ENCODE measurements at regions of chr20 and their contacts with region 1.

Region 1: GRCh38 chr20:32521780-32522525 is 63.2 kb downstream of the NOL4L start:
- DNase-seq: peak; percentile 41 to 73
- H3K4me3 ChIP-seq: no peak overlapping the region
- H3K27ac ChIP-seq: no peak overlapping the region
- H3K4me1 ChIP-seq: peaks cover 20% of the 10 kb centered on the region
- H3K27me3 ChIP-seq: no peaks in the 10 kb centered on the region
- CTCF ChIP-seq: peak; percentile 88

Region 2: GRCh38 chr20:32155017-32155981 is 366.7 kb before region 1 on chr20:
- CTCF ChIA-PET with region 1: no interaction called
- POLR2A ChIA-PET with region 1: no interaction called
- intact Hi-C with region 1: loop called (anchors 5 kb)
- DNase-seq: peak in 1 of 2 experiments; percentile 68
- H3K4me3 ChIP-seq: no peak overlapping the region
- H3K27ac ChIP-seq: peak overlapping the region; percentile 29; the same call in 1 of the 2 replicates
- H3K4me1 ChIP-seq: no peaks in the 10 kb centered on the region
- H3K27me3 ChIP-seq: no peaks in the 10 kb centered on the region
- CTCF ChIP-seq: no peak

Region 3: GRCh38 chr20:32541323-32542258 is 19.6 kb after region 1 on chr20:
- CTCF ChIA-PET with region 1: interaction called, 11 read pairs
- POLR2A ChIA-PET with region 1: no interaction called
- intact Hi-C with region 1: no loop called
- DNase-seq: no peak
- H3K4me3 ChIP-seq: no peak overlapping the region
- H3K27ac ChIP-seq: no peak overlapping the region
- H3K4me1 ChIP-seq: peaks cover 67% of the 10 kb centered on the region
- H3K27me3 ChIP-seq: no peaks in the 10 kb centered on the region
- CTCF ChIP-seq: no peak

Region 4: DNA sequence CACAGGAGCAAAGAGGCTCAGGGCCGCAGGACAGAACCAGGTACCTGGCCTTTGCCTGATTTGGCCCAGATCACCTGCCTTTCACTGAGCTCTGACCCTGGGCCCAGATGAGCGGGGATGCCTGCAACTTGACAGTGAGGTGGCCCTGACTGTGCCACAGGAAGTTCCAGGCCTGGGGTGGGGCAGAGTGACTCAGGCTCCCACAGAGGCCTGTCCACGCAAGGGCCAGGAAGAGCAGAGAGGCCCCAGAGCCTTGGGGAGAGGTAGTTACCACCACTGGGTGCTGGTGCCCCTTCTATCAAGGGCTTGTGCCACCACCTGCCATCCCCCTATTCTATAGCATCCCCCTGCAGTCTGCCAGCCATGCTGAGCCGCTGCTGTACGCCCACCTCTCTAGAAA is 67.3 kb after region 1 on chr20:
- CTCF ChIA-PET with region 1: no interaction called
- POLR2A ChIA-PET with region 1: no interaction called
- intact Hi-C with region 1: no loop called
- DNase-seq: peak; percentile 44 to 51
- H3K4me3 ChIP-seq: no peak overlapping the region
- H3K27ac ChIP-seq: 0 out of 2 replicates have a peak overlapping the region, but pooled peaks have one; percentile 19
- H3K4me1 ChIP-seq: peaks cover 14% of the 10 kb centered on the region
- H3K27me3 ChIP-seq: no peaks in the 10 kb centered on the region
- CTCF ChIP-seq: no peak

Region 5: DNA sequence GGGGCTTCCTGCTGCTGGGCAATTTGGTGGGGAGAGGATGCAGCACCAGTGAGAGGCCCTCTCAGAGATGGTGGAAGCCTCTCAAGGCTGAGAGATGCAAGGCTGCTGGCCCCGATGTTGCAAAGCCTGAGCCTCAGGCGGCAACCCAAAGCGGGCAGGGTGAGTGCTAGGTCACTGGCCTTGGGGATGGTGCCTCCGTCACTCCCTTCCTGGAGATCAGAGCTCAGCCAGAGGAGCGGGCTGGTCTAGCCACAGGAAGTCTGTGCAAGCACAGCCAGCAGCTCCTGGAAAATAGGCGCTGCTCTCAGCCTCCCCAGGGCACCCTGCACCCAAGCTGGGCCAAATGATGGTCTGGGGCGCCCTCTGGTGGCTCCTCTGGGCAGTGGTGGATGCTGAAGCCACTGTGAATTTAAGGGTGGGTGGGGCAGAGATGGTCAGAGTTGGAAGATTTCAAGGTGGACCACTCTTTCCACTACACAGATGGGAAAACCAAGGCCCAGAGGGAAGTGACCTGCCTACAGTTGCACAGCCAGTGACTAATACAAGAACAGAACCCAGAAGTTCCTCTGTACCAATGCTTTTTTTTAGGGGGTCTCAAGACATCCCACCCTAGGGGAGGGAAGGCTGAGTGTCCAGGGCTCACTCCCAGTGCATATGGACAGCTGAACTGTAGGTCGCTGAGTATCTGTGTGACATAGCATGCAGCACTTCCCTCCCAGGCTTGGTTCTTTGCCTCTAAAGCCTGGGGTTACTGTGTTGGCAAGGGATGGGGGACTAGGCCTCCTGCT is 131.0 kb after region 1 on chr20:
- CTCF ChIA-PET with region 1: interaction called, 13 read pairs
- POLR2A ChIA-PET with region 1: no interaction called
- intact Hi-C with region 1: loop called (anchors 1 kb)
- DNase-seq: peak; percentile 89 to 92
- H3K4me3 ChIP-seq: no peak overlapping the region
- H3K27ac ChIP-seq: no peak overlapping the region
- H3K4me1 ChIP-seq: peaks cover 22% of the 10 kb centered on the region
- H3K27me3 ChIP-seq: no peaks in the 10 kb centered on the region
- CTCF ChIP-seq: peak; percentile 94

Measured in PC-9 (cell line).